ENCODE measurements at regions of chr5 and their contacts with region 1.

Region 1: DNA sequence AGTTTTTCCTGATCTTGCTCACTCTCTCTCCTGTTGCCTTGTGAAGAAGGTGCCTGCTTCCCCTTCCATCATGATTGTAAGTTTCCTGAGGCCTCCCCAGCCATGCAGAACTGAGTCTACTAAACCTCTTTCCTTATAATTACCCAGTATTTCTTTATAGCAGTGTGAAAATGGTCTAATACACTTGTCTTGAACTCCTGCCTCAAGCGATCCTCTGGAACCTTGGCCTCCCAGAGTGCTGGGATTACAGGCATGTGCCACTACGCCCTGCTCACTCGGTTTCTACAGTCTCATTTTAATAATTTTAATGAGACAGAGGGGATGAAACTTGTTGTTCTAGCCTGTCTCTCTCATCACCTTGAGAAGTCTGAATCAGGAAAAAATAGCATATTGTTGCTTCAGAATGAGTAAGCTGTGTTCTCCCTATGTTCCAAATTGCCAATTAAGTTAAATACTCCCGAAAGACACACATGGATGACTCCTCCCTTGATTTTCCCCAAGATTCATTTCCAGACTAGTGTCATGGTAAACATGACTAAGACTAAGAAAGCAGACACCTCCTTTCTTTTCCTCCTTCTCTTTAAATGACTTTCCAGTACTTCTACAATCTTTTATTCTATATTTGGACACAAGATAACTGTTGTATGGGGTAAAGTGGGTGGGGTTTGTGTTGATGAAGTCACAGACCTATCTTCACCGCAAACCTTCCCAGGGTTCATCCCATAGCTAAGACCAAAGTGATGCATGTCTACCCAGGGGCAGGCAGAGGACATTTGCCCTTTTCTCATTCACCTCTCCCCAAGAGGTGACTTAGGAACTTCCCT is 7.8 kb upstream of the DNAJC18 start:
- DNase-seq: no peak
- H3K4me3 Mint-ChIP-seq: no peak overlapping the region
- H3K27ac Mint-ChIP-seq: peak overlapping the region; percentile 63
- H3K4me1 Mint-ChIP-seq: peaks cover 62% of the 10 kb centered on the region
- H3K27me3 Mint-ChIP-seq: no peaks in the 10 kb centered on the region

Region 2: DNA sequence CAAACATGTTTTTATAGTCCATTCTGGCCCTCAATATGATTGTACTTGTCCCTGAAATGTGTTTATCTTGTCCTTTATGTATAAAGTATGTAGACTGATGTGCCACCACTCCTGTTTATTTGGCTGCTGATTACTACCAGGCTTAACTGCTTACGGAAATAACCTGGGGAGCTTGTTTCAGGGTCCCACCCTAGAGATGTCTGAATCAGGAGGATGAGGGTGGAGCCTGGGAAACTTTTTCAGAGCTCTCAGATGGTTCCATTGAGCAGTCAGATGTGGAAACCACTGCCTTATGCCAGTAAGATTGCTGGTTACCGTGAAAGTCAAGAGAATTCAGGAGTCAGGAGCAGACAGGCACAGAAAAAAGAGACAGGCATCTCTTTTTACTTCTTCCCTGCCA is 83.2 kb before region 1 on chr5:
- CTCF ChIA-PET with region 1: no interaction called
- POLR2A ChIA-PET with region 1: no interaction called
- DNase-seq: no peak
- H3K4me3 Mint-ChIP-seq: no peak overlapping the region
- H3K27ac Mint-ChIP-seq: no peak overlapping the region
- H3K4me1 Mint-ChIP-seq: peaks cover 2% of the 10 kb centered on the region
- H3K27me3 Mint-ChIP-seq: no peaks in the 10 kb centered on the region

Region 3: DNA sequence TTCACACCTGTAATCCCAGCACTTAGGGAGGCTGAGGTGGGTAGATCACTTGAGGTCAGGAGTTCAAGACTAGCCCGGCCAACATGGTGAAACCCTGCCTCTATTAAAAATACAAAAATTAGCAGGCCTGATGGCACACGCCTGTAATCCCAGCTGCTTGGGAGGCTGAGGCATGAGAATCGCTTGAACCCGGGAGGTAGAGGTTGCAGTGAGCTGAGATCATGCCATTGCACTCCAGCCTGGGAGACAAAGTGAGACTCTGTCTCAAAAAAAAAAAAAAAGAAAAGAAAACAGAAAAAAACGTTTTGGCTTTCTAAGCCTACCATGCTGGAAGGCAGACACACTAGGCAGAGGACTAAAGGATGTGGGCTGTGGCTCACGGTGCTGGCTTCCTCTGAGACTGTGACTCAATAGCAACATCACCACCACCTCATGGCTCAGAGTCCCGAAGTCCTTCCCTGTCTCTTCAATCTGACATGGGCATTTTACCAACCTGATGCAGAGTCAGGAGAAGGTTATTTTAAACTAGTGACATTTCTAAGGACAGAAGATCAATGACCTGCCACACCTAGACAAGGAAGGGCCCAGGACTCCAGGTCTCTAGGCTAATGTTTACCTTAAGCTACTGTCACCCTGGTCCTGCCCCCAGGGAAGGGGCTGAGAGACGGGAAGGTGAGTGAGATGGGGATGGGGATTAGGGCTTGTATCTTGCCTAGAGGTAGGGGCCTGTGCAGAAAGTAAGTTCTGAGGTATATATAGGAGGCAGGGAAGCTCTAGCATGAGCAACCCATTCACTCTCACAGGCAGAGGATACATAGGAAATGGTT is 11.6 kb after region 1 on chr5:
- CTCF ChIA-PET with region 1: interaction called, 14 read pairs
- POLR2A ChIA-PET with region 1: no interaction called
- DNase-seq: peak; percentile 89
- H3K4me3 Mint-ChIP-seq: peak overlapping the region; percentile 58
- H3K27ac Mint-ChIP-seq: peak overlapping the region; percentile 92
- H3K4me1 Mint-ChIP-seq: peaks cover 71% of the 10 kb centered on the region
- H3K27me3 Mint-ChIP-seq: no peaks in the 10 kb centered on the region

Region 4: GRCh38 chr5:139565411-139566305 is 118.5 kb after region 1 on chr5:
- CTCF ChIA-PET with region 1: no interaction called
- POLR2A ChIA-PET with region 1: no interaction called
- DNase-seq: peak; percentile 82
- H3K4me3 Mint-ChIP-seq: peak overlapping the region; percentile 89
- H3K27ac Mint-ChIP-seq: peak overlapping the region; percentile 96
- H3K4me1 Mint-ChIP-seq: peaks cover 70% of the 10 kb centered on the region
- H3K27me3 Mint-ChIP-seq: no peaks in the 10 kb centered on the region

Region 5: GRCh38 chr5:139725073-139725830 is 278.1 kb after region 1 on chr5:
- CTCF ChIA-PET with region 1: no interaction called
- POLR2A ChIA-PET with region 1: no interaction called
- DNase-seq: no peak
- H3K4me3 Mint-ChIP-seq: no peak overlapping the region
- H3K27ac Mint-ChIP-seq: no peak overlapping the region
- H3K4me1 Mint-ChIP-seq: no peaks in the 10 kb centered on the region
- H3K27me3 Mint-ChIP-seq: no peaks in the 10 kb centered on the region

Region 6: DNA sequence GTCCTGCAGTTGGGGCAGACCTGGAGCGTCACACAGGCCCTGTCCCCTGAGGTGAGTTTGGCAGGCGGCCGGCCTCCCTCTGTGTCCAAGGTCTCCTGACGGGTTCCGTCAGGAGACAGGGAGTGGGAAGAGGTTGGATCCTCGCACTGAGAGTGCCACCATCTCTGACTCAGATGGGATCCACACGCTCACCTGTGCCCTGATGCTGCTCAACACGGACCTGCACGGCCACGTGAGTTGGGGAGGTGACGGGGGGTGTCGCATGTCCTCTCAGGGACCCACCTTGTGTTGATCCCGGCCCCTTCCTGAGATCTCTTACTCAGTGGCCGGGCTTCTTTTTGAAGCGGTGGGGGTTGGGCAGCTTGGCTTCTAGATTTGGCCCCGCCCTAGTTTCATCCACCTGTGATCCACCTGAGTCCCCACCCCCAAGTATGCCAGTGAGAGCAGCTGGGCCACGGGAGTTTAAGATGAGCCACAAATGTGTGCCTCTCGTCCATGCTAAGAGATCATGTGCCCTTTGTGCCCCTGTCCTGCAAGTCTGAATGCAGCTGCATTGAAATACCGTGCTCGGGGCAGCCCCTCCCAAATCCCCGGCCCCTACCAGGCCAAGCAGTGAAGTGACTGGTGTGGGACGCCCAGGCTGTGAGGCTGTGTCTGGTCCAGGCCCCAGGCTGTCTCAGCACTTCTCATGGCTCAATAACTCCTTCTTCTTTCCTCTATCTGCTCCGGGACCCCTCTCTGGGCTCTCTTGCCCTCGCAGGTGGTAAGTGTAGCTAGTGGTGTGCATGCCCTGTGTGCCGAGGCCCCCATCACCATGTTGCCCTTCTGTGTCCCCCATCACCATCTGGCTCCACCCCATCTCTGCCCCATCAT is 375.6 kb after region 1 on chr5:
- CTCF ChIA-PET with region 1: no interaction called
- POLR2A ChIA-PET with region 1: no interaction called
- DNase-seq: no peak
- H3K4me3 Mint-ChIP-seq: no peak overlapping the region
- H3K27ac Mint-ChIP-seq: no peak overlapping the region
- H3K4me1 Mint-ChIP-seq: no peaks in the 10 kb centered on the region
- H3K27me3 Mint-ChIP-seq: peaks cover 3% of the 10 kb centered on the region